PC-9 (cell line): ENCODE measurements at regions of chr7 and their contacts with region 1.

Region 1: DNA sequence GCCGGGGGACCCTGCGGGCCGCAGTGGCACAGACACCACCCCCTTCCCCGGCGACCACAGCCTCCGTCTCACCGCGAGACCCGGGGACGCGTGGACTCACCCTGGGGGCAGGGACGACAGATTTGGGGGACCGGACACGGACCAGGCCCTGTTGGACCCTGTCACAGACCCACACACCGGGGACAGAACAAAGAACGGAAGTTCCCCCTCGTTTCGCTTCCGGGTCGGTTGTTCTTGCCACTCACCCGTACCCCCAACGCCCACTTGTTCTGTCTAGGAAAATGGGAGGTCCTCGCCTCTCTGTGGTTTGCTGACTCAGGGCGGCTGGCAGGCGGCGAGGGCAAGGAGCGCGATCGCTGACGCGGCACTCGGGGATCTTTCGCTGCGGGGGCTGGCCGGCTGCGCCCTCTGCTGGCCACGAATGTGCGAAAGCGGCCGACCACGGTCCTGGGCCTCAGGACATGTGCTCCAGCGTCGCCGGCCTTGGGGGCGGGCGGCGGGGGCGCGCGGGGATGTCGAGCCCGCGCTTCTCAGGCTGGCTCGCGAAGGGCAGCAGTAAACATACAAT is at the start of gene ZNF3:
- DNase-seq: peak; percentile 95 to 99
- H3K4me3 ChIP-seq: peak within 1 kb of the TSS; percentile 93
- H3K27ac ChIP-seq: peak within 1 kb of the TSS; percentile 79
- H3K4me1 ChIP-seq: peaks cover 16% of the 10 kb centered on the region
- H3K27me3 ChIP-seq: no peaks in the 10 kb centered on the region
- CTCF ChIP-seq: peak; percentile 92
- total RNA-seq, gene ZNF3: 35.2 and 39.0 TPM in 2 replicates

Region 2: GRCh38 chr7:99792967-99793366 is 288.7 kb before region 1 on chr7:
- CTCF ChIA-PET with region 1: no interaction called
- POLR2A ChIA-PET with region 1: interaction called, 12 read pairs
- intact Hi-C with region 1: no loop called
- DNase-seq: no peak
- H3K4me3 ChIP-seq: no peak overlapping the region
- H3K27ac ChIP-seq: no peak overlapping the region
- H3K4me1 ChIP-seq: no peaks in the 10 kb centered on the region
- H3K27me3 ChIP-seq: no peaks in the 10 kb centered on the region
- CTCF ChIP-seq: no peak

Region 3: GRCh38 chr7:99928994-99929729 is 152.5 kb before region 1 on chr7 and contains the start of gene GJC3:
- CTCF ChIA-PET with region 1: no interaction called
- POLR2A ChIA-PET with region 1: no interaction called
- intact Hi-C with region 1: no loop called
- DNase-seq: peak; percentile 58 to 68
- H3K4me3 ChIP-seq: peak within 1 kb of the TSS; percentile 48; the same call in 1 of the 2 replicates
- H3K27ac ChIP-seq: no peak within 1 kb of the TSS
- H3K4me1 ChIP-seq: 0 out of 2 replicates have a peak, but pooled peaks cover 3% of the 10 kb centered on the region
- H3K27me3 ChIP-seq: peaks cover 63% of the 10 kb centered on the region
- CTCF ChIP-seq: peak; percentile 58
- total RNA-seq, gene GJC3: not detected in 2 replicates

Region 4: DNA sequence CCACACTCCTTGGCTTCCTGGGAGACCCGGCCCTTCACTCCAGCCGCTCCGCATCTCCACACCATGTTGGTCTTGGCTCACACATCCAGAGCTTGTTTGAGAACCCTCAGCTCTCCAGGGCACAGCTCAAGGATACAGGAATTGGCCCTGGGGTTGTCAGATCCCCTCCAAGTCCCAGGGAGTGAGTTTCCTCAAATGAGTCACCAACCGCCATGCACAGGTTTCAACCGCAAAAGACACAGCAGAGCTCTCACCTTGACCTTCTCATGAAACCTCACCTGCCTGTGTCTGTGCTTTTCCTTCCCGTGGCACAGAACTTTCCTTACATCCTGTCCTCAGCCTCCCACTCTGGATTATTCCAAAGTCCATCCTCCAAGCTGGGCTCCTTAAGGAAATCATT is 126.4 kb before region 1 on chr7:
- CTCF ChIA-PET with region 1: no interaction called
- POLR2A ChIA-PET with region 1: interaction called, 20 read pairs
- intact Hi-C with region 1: no loop called
- DNase-seq: peak; percentile 79 to 88
- H3K4me3 ChIP-seq: no peak overlapping the region
- H3K27ac ChIP-seq: peak overlapping the region; percentile 22
- H3K4me1 ChIP-seq: peaks cover 12% of the 10 kb centered on the region
- H3K27me3 ChIP-seq: peaks cover 18% of the 10 kb centered on the region; the same call in 1 of the 2 replicates
- CTCF ChIP-seq: no peak

Region 5: GRCh38 chr7:100049441-100050311 is 31.9 kb before region 1 on chr7 and contains the start of gene ZSCAN21:
- CTCF ChIA-PET with region 1: no interaction called
- POLR2A ChIA-PET with region 1: no interaction called
- intact Hi-C with region 1: loop called (anchors 2 kb)
- DNase-seq: peak; percentile 54 to 81
- H3K4me3 ChIP-seq: peak within 1 kb of the TSS; percentile 89
- H3K27ac ChIP-seq: peak within 1 kb of the TSS; percentile 65
- H3K4me1 ChIP-seq: peaks cover 9% of the 10 kb centered on the region; the same call in 1 of the 2 replicates
- H3K27me3 ChIP-seq: no peaks in the 10 kb centered on the region
- CTCF ChIP-seq: no peak; the same call in 1 of the 2 replicates
- total RNA-seq, gene ZSCAN21: 8.9 and 9.7 TPM in 2 replicates

Region 6: DNA sequence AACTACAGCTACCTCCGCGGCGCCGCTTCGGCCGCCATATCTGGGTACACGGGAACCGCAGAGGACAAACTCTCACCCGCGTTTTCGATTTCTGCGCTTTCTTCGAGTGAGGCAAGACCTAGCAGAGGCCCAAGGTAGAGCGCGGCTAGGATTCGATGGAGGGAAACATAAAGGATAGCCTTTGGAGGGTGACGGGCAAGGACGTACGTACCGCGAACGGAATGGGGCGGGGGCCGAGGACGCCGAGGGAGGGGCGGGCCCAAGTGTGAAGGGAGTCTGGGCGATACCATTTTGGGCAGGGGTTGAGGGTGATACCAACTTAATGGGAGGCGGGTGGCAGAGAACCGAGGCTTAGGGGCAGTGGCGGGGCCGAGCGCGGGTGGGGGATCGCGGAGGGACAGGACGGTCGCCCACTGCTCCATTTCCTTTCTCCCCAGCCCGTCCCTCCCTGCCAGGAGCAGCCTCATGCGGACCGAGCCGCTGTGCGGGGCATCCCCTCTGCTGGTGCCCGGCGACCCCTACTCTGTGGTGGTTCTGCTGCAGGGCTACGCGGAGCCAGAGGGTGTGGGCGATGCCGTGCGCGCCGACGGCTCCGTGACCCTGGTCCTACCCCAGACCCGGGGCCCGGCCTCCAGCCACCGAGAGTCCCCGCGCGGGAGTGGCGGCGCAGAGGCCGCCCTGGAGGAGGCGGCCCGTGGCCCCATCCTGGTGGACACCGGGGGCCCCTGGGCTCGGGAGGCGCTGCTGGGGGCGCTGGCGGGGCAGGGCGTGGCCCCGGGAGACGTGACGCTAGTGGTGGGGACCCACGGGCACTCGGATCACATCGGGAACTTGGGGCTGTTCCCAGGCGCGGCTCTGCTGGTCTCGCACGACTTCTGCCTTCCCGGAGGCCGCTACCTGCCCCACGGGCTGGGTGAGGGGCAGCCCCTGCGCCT is 45.6 kb after region 1 on chr7 and contains the start of gene MBLAC1:
- CTCF ChIA-PET with region 1: interaction called, 10 read pairs
- POLR2A ChIA-PET with region 1: interaction called, 10 read pairs
- intact Hi-C with region 1: loop called (anchors 1 kb)
- DNase-seq: peak; percentile 68 to 92
- H3K4me3 ChIP-seq: peak within 1 kb of the TSS; percentile 75
- H3K27ac ChIP-seq: peak within 1 kb of the TSS; percentile 82
- H3K4me1 ChIP-seq: peaks cover 19% of the 10 kb centered on the region; the same call in 1 of the 2 replicates
- H3K27me3 ChIP-seq: no peaks in the 10 kb centered on the region
- CTCF ChIP-seq: no peak
- total RNA-seq, gene MBLAC1: 0.70 and 1.4 TPM in 2 replicates

Region 7: GRCh38 chr7:100200693-100201092 is 119.1 kb after region 1 on chr7:
- CTCF ChIA-PET with region 1: no interaction called
- POLR2A ChIA-PET with region 1: no interaction called
- intact Hi-C with region 1: no loop called
- DNase-seq: no peak
- H3K4me3 ChIP-seq: no peak overlapping the region
- H3K27ac ChIP-seq: no peak overlapping the region
- H3K4me1 ChIP-seq: no peaks in the 10 kb centered on the region
- H3K27me3 ChIP-seq: no peaks in the 10 kb centered on the region
- CTCF ChIP-seq: no peak